ENCODE measurements at regions of chr19 and their contacts with region 1.

Region 1: GRCh38 chr19:57850553-57851017 is 926 bp downstream of the ZNF587 start:
- DNase-seq: peak in 1 of 2 donors; percentile 10
- ATAC-seq: no peak
- H3K4me3 ChIP-seq: peak overlapping the region; percentile 79
- H3K4me3 Mint-ChIP-seq: peak overlapping the region; percentile 96
- H3K27ac ChIP-seq: peak overlapping the region; percentile 84
- H3K27ac Mint-ChIP-seq: peak overlapping the region; percentile 96 to 98
- H3K4me1 ChIP-seq: peaks cover 18% of the 10 kb centered on the region
- H3K4me1 Mint-ChIP-seq: peaks cover 29 to 30% of the 10 kb centered on the region in 2 donors
- H3K27me3 ChIP-seq: no peaks in the 10 kb centered on the region
- H3K27me3 Mint-ChIP-seq: no peaks in the 10 kb centered on the region
- CTCF ChIP-seq: no peak

Region 2: DNA sequence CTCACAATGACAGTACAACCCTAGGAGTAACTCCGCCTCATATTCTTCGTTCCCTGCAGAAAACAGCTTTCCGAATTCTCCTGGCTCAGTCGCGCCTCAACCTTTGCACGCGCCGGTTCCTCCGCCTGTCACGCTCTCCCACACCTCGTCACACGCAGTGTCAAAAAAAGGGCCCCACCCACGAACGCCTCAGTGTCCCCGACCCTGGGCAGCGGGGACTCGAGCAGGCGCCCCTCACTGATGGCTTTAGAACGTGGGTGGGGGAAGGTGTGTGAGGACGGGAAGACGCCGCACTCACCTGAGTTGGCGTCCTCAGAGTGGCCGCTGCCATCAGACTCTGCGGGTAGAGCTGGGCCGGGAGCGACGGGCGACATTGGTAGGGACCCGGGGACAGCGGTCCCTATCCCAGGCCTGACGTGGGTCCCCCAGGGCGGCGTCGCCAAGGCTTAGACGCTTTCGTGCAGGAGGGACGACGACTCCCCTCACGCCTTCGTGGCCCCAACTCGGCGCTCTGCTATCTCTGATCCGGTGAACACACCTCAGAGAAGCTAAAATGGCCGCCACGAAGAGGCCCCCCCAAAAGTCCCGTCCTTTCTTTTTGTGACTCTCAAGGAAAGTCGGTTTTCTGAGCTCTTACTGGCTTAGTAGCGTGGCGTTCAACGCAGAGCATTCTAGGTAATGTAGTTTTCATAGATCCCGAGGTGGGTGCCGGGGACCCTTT is 141.8 kb before region 1 on chr19 and contains the start of gene ZNF154:
- intact Hi-C with region 1: no loop called
- DNase-seq: peak; percentile 54 to 63
- ATAC-seq: peak; percentile 67 to 89 (median 87)
- H3K4me3 ChIP-seq: peak within 1 kb of the TSS; percentile 56
- H3K4me3 Mint-ChIP-seq: peak within 1 kb of the TSS; percentile 86
- H3K27ac ChIP-seq: peak within 1 kb of the TSS; percentile 90
- H3K27ac Mint-ChIP-seq: peak within 1 kb of the TSS; percentile 83 to 99
- H3K4me1 ChIP-seq: peaks cover 14% of the 10 kb centered on the region
- H3K4me1 Mint-ChIP-seq: peaks cover 7 to 53% of the 10 kb centered on the region in 2 donors
- H3K27me3 ChIP-seq: no peaks in the 10 kb centered on the region
- H3K27me3 Mint-ChIP-seq: no peaks in the 10 kb centered on the region
- CTCF ChIP-seq: no peak
- total RNA-seq, gene ZNF154: 4.2 to 21.6 (median 9.5) TPM

Region 3: DNA sequence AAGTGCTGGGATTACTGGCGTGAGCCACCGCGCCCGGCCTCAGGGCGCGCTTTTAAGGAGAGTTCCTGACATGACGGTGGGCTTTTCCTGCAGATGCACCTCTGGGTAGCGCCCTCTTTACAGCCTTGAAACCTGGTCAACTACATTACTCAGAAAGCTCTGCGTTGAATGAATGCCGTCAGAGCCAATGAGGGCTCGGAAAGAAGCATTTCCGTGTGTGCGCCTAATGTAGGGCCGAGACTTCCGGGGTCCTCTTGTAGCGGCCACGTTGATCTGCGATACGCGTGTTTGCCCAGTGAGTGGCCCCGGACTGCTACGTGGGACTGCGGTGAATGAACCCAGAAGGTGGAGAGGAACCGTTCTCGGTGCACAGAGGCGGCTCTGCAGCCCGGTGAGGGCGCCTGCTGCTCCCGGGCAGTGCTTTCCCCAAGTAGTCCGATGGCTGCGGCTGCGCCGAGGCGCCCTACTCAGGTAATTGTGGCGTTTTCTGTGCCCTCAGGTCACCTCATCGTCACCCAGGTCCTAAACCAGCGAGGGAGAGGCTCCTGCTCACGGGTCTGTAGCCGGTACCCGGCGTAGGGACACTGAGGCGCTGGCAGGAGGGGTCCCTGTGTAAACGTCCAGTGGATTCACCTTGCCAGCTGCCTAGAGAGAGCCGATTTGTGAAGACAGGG is 31.0 kb before region 1 on chr19:
- intact Hi-C with region 1: loop called (anchors 2 kb)
- DNase-seq: peak; percentile 74 to 93
- ATAC-seq: peak; percentile 83 to 91 (median 85)
- H3K4me3 ChIP-seq: peak overlapping the region; percentile 91
- H3K4me3 Mint-ChIP-seq: peak overlapping the region; percentile 94
- H3K27ac ChIP-seq: peak overlapping the region; percentile 81
- H3K27ac Mint-ChIP-seq: peak overlapping the region; percentile 96 to 97
- H3K4me1 ChIP-seq: peaks cover 20% of the 10 kb centered on the region
- H3K4me1 Mint-ChIP-seq: peaks cover 43 to 46% of the 10 kb centered on the region in 2 donors
- H3K27me3 ChIP-seq: no peaks in the 10 kb centered on the region
- H3K27me3 Mint-ChIP-seq: no peaks in the 10 kb centered on the region
- CTCF ChIP-seq: no peak

Region 4: DNA sequence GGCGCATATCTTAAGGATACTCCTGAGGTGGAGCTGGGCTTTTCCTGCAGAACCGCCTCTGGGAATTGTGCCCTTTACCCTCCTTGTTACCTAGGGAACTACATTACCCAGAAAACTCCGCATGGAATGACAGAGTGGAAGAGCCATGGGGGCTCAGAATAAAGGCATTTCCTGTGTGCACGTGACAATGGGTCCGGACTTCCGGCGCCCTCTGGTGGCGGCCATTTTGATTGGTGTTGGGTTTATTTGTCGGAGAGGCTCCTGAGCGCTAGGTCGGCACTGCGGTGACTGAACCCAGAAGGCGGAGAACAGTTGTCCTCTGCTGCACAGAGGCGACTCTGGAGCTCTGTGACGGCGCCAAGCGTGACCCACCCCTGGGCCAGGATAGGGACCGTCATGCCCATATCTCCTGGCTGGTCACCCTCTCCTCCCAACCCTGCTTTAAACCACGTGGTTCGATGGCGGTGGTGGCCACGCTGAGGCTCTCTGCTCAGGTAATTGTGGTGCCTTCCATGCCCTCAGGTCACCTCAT is 20.4 kb before region 1 on chr19 and contains the start of gene ZNF587B:
- intact Hi-C with region 1: no loop called
- DNase-seq: peak; percentile 28 to 49
- ATAC-seq: peak in 2 of 3 donors; percentile 62 to 64
- H3K4me3 ChIP-seq: no peak within 1 kb of the TSS
- H3K4me3 Mint-ChIP-seq: no peak within 1 kb of the TSS
- H3K27ac ChIP-seq: no peak within 1 kb of the TSS
- H3K27ac Mint-ChIP-seq: peak within 1 kb of the TSS in 1 of 2 donors; percentile 54
- H3K4me1 ChIP-seq: no peaks in the 10 kb centered on the region
- H3K4me1 Mint-ChIP-seq: peaks cover 22 to 25% of the 10 kb centered on the region in 2 donors
- H3K27me3 ChIP-seq: no peaks in the 10 kb centered on the region
- H3K27me3 Mint-ChIP-seq: no peaks in the 10 kb centered on the region
- CTCF ChIP-seq: peak; percentile 33
- total RNA-seq, gene ZNF587B: 23.4 to 25.7 (median 23.9) TPM

Region 5: DNA sequence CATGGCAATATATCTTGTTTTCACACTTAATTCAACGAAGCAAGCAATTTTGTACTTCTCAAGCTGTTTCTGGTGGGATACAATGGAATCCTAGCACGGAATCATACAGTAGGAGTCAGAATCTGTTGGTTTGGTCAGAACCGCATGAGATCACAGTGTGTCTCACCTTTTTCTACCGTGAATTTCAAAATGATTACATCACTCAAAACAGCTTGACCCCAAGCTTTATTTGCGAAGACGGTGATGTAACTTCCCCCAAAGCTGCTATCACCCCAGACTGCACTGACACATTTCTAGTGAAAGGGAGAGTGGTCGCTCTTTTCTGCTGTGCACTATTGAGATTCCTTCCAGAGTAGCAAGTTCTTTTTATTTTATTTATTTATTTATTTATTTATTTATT is 114.2 kb after region 1 on chr19:
- intact Hi-C with region 1: no loop called
- DNase-seq: no peak
- ATAC-seq: no peak
- H3K4me3 ChIP-seq: no peak overlapping the region
- H3K4me3 Mint-ChIP-seq: no peak overlapping the region
- H3K27ac ChIP-seq: no peak overlapping the region
- H3K27ac Mint-ChIP-seq: no peak overlapping the region
- H3K4me1 ChIP-seq: no peaks in the 10 kb centered on the region
- H3K4me1 Mint-ChIP-seq: no peaks in the 10 kb centered on the region
- H3K27me3 ChIP-seq: no peaks in the 10 kb centered on the region
- H3K27me3 Mint-ChIP-seq: no peaks in the 10 kb centered on the region
- CTCF ChIP-seq: no peak

Measured in natural killer cell (primary cell).